Activated B cell treated with CpG ODN at 0.5 μM for 24 hours (primary cell): ENCODE measurements at regions of chr1 and their contacts with region 1.

Region 1: DNA sequence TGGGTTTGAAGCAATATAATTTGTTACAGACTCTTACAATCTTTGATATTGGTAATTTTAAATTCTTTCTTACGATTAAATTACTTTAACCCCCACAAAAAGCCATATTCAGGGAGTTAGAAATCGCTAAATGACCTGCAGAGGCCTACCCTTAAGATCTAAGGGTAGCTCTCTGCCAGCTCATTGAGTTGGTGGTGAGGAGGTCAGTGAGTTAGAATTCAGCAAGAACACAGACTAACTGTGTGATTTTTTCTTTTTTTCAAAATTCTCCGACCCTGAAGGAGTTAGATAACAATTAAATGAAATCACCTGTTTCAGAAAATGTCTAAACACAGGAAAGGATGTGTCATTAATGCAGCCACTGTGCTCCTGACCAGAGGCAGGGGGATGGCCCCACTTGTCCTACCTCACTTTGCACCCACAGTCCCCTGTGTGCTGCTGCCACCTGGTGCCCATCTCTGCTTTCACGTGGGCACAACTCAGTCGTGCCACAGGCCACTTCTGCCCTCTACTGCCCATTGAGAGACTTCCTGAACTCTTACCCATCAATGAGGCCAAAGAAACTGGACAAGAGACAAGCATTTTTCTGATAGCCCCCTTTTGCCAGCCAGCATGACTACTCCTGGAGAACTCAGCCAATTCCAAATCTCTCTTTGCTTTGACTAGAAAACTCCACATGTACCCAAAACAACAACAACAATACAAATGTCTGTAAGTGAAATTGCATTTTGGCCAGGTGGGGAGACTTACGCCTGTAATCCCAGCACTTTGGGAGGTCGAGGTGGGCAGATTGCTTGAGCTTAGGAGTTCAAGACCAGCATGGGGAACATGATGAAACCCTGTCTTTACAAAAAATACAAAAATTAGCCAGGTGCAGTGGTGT is 8.4 kb downstream of the CFAP45 start:
- DNase-seq: peak; percentile 54
- ATAC-seq: peak; percentile 75
- H3K4me3 Mint-ChIP-seq: no peak overlapping the region
- H3K27ac Mint-ChIP-seq: peak overlapping the region; percentile 43
- H3K4me1 Mint-ChIP-seq: peaks cover 24% of the 10 kb centered on the region
- H3K27me3 Mint-ChIP-seq: no peaks in the 10 kb centered on the region
- CTCF ChIP-seq: peak; percentile 75

Region 2: DNA sequence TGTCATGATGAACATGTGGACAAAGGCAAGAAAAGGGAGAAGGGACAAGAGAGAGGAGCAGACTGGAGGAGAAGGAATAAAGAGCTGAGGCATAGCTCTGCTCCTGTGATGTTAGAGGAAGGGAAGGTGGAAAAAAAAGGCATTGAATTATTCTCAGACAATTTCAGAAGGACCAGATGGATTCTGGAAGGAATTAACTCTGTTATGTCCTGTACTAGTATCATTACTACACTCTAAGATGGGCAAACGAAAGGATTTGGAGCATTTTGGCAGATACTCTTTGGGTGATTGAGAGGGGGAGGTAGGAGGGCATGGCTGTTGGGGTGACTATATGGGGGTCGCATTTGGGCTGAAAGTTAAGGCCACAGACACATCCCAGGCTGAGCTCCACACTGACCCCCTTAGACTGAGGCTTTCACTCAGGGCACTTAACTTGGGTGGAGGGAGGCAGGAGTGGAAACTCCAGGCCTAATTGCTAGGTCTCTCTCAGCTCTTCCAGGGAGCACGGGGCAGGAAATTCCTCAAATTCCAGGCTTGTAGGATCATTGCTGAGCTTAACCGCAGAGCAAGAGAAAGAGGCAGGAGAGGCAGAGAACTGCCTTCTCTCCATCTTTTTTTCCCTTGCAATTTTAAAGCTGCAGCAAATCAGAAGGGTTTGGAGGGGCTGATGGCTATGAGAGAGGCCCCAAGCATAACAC is 1872.2 kb before region 1 on chr1:
- CTCF ChIA-PET with region 1: no interaction called
- POLR2A ChIA-PET with region 1: no interaction called
- intact Hi-C with region 1: no loop called
- DNase-seq: no peak
- ATAC-seq: no peak
- H3K4me3 Mint-ChIP-seq: no peak overlapping the region
- H3K27ac Mint-ChIP-seq: no peak overlapping the region
- H3K4me1 Mint-ChIP-seq: no peaks in the 10 kb centered on the region
- H3K27me3 Mint-ChIP-seq: peaks cover 28% of the 10 kb centered on the region
- CTCF ChIP-seq: no peak

Region 3: GRCh38 chr1:159197561-159198557 is 693.7 kb before region 1 on chr1:
- CTCF ChIA-PET with region 1: no interaction called
- POLR2A ChIA-PET with region 1: no interaction called
- intact Hi-C with region 1: no loop called
- DNase-seq: peak; percentile 37
- ATAC-seq: peak; percentile 94
- H3K4me3 Mint-ChIP-seq: no peak overlapping the region
- H3K27ac Mint-ChIP-seq: no peak overlapping the region
- H3K4me1 Mint-ChIP-seq: no peaks in the 10 kb centered on the region
- H3K27me3 Mint-ChIP-seq: peaks cover 26% of the 10 kb centered on the region
- CTCF ChIP-seq: no peak

Region 4: GRCh38 chr1:159214149-159214760 is 677.3 kb before region 1 on chr1:
- CTCF ChIA-PET with region 1: interaction called, 7 read pairs
- POLR2A ChIA-PET with region 1: no interaction called
- intact Hi-C with region 1: loop called (anchors 1 kb)
- DNase-seq: no peak
- ATAC-seq: peak; percentile 62
- H3K4me3 Mint-ChIP-seq: no peak overlapping the region
- H3K27ac Mint-ChIP-seq: no peak overlapping the region
- H3K4me1 Mint-ChIP-seq: peaks cover 2% of the 10 kb centered on the region
- H3K27me3 Mint-ChIP-seq: peaks cover 46% of the 10 kb centered on the region
- CTCF ChIP-seq: peak; percentile 82

Region 5: GRCh38 chr1:159266832-159267231 is 624.7 kb before region 1 on chr1:
- CTCF ChIA-PET with region 1: no interaction called
- POLR2A ChIA-PET with region 1: no interaction called
- intact Hi-C with region 1: no loop called
- DNase-seq: no peak
- ATAC-seq: no peak
- H3K4me3 Mint-ChIP-seq: no peak overlapping the region
- H3K27ac Mint-ChIP-seq: no peak overlapping the region
- H3K4me1 Mint-ChIP-seq: no peaks in the 10 kb centered on the region
- H3K27me3 Mint-ChIP-seq: peaks cover 44% of the 10 kb centered on the region
- CTCF ChIP-seq: no peak

Region 6: GRCh38 chr1:159798893-159799292 is 92.6 kb before region 1 on chr1:
- CTCF ChIA-PET with region 1: interaction called, 176 read pairs
- POLR2A ChIA-PET with region 1: interaction called, 5 read pairs
- intact Hi-C with region 1: loop called (anchors 1 kb)
- DNase-seq: no peak
- ATAC-seq: no peak
- H3K4me3 Mint-ChIP-seq: no peak overlapping the region
- H3K27ac Mint-ChIP-seq: no peak overlapping the region
- H3K4me1 Mint-ChIP-seq: peaks cover 8% of the 10 kb centered on the region
- H3K27me3 Mint-ChIP-seq: peaks cover 28% of the 10 kb centered on the region
- CTCF ChIP-seq: no peak

Region 7: GRCh38 chr1:159829273-159829634 is 62.3 kb before region 1 on chr1:
- CTCF ChIA-PET with region 1: interaction called, 4 read pairs
- POLR2A ChIA-PET with region 1: no interaction called
- intact Hi-C with region 1: loop called (anchors 2 kb)
- DNase-seq: no peak
- ATAC-seq: peak; percentile 94
- H3K4me3 Mint-ChIP-seq: no peak overlapping the region
- H3K27ac Mint-ChIP-seq: peak overlapping the region; percentile 16
- H3K4me1 Mint-ChIP-seq: peaks cover 15% of the 10 kb centered on the region
- H3K27me3 Mint-ChIP-seq: peaks cover 6% of the 10 kb centered on the region
- CTCF ChIP-seq: no peak

Region 8: GRCh38 chr1:159924981-159925712 is 33.6 kb after region 1 on chr1 and contains the start of gene TAGLN2:
- CTCF ChIA-PET with region 1: interaction called, 52 read pairs
- POLR2A ChIA-PET with region 1: interaction called, 20 read pairs
- intact Hi-C with region 1: loop called (anchors 1 kb)
- DNase-seq: peak; percentile 94
- ATAC-seq: peak; percentile 69
- H3K4me3 Mint-ChIP-seq: peak within 1 kb of the TSS; percentile 99
- H3K27ac Mint-ChIP-seq: peak within 1 kb of the TSS; percentile 99
- H3K4me1 Mint-ChIP-seq: peaks cover 56% of the 10 kb centered on the region
- H3K27me3 Mint-ChIP-seq: no peaks in the 10 kb centered on the region
- CTCF ChIP-seq: no peak
- total RNA-seq, gene TAGLN2: 327 and 364 TPM in 2 replicates